GM12878 (cell line): ENCODE measurements at regions of chr9 and their contacts with region 1.

Region 1: GRCh38 chr9:127626752-127627493 is 14.8 kb downstream of the STXBP1 start:
- DNase-seq: no peak
- ATAC-seq: no peak
- H3K4me3 ChIP-seq: no peak overlapping the region
- H3K27ac ChIP-seq: no peak overlapping the region
- H3K4me1 ChIP-seq: no peaks in the 10 kb centered on the region
- H3K27me3 ChIP-seq: no peaks in the 10 kb centered on the region; a peak in 3 of 4 replicates
- CTCF ChIP-seq: no peak
- EP300 ChIP-seq: no peak
- POLR2A ChIP-seq: no peak
- RAD21 ChIP-seq: no peak

Region 2: GRCh38 chr9:127598839-127599548 is 27.9 kb before region 1 on chr9:
- CTCF ChIA-PET with region 1: no interaction called
- POLR2A ChIA-PET with region 1: no interaction called
- RAD21 ChIA-PET with region 1: no interaction called
- SMC1A ChIA-PET with region 1: no interaction called
- in situ Hi-C with region 1: no loop called
- intact Hi-C with region 1: loop called (anchors 2 kb)
- DNase-seq: no peak
- ATAC-seq: no peak
- H3K4me3 ChIP-seq: no peak overlapping the region
- H3K27ac ChIP-seq: no peak overlapping the region
- H3K4me1 ChIP-seq: no peaks in the 10 kb centered on the region
- H3K27me3 ChIP-seq: no peaks in the 10 kb centered on the region; a peak in 1 of 4 replicates
- CTCF ChIP-seq: no peak
- EP300 ChIP-seq: no peak
- POLR2A ChIP-seq: no peak
- RAD21 ChIP-seq: no peak